OCI-LY7 (cell line): ENCODE measurements at regions of chr14 and their contacts with region 1.

Region 1: GRCh38 chr14:35855876-35856481 is 29.8 kb downstream of the BRMS1L start:
- DNase-seq: peak; percentile 93
- H3K4me3 ChIP-seq: peak overlapping the region; percentile 59
- H3K27ac ChIP-seq: peak overlapping the region; percentile 82
- H3K4me1 ChIP-seq: peaks cover 60% of the 10 kb centered on the region
- CTCF ChIP-seq: peak; percentile 68

Region 2: GRCh38 chr14:36315159-36315853 is 459.3 kb after region 1 on chr14:
- CTCF ChIA-PET with region 1: no interaction called
- POLR2A ChIA-PET with region 1: no interaction called
- intact Hi-C with region 1: loop called (anchors 10 kb)
- DNase-seq: no peak
- H3K4me3 ChIP-seq: no peak overlapping the region
- H3K27ac ChIP-seq: no peak overlapping the region
- H3K4me1 ChIP-seq: peaks cover 14% of the 10 kb centered on the region
- CTCF ChIP-seq: no peak

Region 3: DNA sequence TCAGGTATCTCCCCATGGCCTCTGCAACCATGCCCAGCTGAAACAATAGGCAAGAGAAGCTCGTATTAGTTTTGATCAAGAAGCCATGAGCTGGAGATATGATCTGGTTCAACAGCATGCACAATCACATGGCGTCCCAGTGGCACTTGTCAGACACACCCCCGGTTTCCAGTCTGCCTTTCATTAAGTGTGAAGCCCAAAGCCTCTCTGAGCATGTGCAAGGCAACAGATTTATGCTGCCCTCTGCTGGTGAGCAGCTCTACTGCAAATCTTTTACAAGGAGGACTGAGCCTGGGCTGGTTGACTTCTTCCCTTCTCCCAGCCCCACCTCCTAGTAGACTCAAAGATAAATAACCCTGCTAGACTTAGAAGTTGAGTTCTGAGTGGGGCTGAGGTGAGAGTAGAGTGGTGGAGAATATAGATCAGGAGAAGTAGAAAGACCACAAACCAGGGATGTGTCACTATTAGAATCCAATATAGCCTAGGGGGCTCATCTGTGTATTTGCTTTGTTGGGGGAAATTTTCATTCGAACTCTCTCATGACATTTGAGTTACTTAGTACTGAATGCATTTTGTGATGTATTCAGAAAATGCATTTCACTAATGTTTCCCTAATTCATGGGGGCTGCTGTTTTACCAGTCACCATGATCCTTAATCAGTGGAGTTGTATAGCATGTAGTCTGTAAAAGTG is 518.1 kb after region 1 on chr14:
- CTCF ChIA-PET with region 1: no interaction called
- POLR2A ChIA-PET with region 1: no interaction called
- intact Hi-C with region 1: loop called (anchors 10 kb)
- DNase-seq: peak; percentile 80
- H3K4me3 ChIP-seq: no peak overlapping the region
- H3K27ac ChIP-seq: no peak overlapping the region
- H3K4me1 ChIP-seq: no peaks in the 10 kb centered on the region
- CTCF ChIP-seq: peak; percentile 90